ENCODE measurements at regions of chr10 and their contacts with region 1.

Region 1: GRCh38 chr10:79042639-79043411 is 25.9 kb upstream of the ZMIZ1 start:
- DNase-seq: no peak
- H3K4me3 Mint-ChIP-seq: no peak overlapping the region
- H3K27ac Mint-ChIP-seq: no peak overlapping the region
- H3K4me1 Mint-ChIP-seq: peaks cover under 1% of the 10 kb centered on the region
- H3K27me3 Mint-ChIP-seq: peaks cover 37% of the 10 kb centered on the region
- CTCF ChIP-seq: no peak

Region 2: GRCh38 chr10:78852466-78853240 is 190.2 kb before region 1 on chr10:
- CTCF ChIA-PET with region 1: no interaction called
- intact Hi-C with region 1: no loop called
- DNase-seq: no peak
- H3K4me3 Mint-ChIP-seq: no peak overlapping the region
- H3K27ac Mint-ChIP-seq: no peak overlapping the region
- H3K4me1 Mint-ChIP-seq: no peaks in the 10 kb centered on the region
- H3K27me3 Mint-ChIP-seq: peaks cover 17% of the 10 kb centered on the region
- CTCF ChIP-seq: peak; percentile 36

Region 3: DNA sequence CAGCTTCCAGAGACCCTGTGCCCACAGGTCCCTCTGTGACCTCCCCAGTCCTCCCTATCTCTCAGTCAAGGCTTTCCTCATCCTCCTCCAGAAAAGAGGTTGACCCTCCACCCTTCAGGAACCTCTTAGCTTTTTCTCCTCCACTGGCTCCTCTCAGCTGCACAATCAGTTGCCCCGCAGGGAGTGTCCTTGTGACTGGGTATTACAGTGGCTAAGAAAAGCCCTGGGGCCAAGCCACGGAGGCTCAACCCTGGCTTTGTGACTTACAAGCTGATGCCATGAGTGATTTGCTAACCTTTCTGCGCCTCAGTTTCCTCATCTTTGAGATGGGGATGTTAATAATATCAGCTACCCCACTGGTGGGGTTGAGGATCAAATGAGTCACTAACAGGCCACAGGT is 40.5 kb before region 1 on chr10:
- CTCF ChIA-PET with region 1: no interaction called
- intact Hi-C with region 1: loop called (anchors 1 kb)
- DNase-seq: no peak
- H3K4me3 Mint-ChIP-seq: no peak overlapping the region
- H3K27ac Mint-ChIP-seq: no peak overlapping the region
- H3K4me1 Mint-ChIP-seq: no peaks in the 10 kb centered on the region
- H3K27me3 Mint-ChIP-seq: peaks cover 56% of the 10 kb centered on the region
- CTCF ChIP-seq: no peak